HepG2 (cell line): ENCODE measurements at regions of chr3 and their contacts with region 1.

Region 1: GRCh38 chr3:197256836-197257444 is 41.5 kb downstream of the DLG1 start:
- DNase-seq: peak; percentile 41
- ATAC-seq: no peak
- H3K4me3 ChIP-seq: no peak overlapping the region
- H3K27ac ChIP-seq: no peak overlapping the region
- H3K4me1 ChIP-seq: peaks cover 35% of the 10 kb centered on the region
- H3K27me3 ChIP-seq: no peaks in the 10 kb centered on the region
- CTCF ChIP-seq: peak; percentile 46
- EP300 ChIP-seq: no peak
- POLR2A ChIP-seq: no peak
- RAD21 ChIP-seq: 0 out of 2 replicates have a peak, but pooled peaks have one; percentile 25

Region 2: DNA sequence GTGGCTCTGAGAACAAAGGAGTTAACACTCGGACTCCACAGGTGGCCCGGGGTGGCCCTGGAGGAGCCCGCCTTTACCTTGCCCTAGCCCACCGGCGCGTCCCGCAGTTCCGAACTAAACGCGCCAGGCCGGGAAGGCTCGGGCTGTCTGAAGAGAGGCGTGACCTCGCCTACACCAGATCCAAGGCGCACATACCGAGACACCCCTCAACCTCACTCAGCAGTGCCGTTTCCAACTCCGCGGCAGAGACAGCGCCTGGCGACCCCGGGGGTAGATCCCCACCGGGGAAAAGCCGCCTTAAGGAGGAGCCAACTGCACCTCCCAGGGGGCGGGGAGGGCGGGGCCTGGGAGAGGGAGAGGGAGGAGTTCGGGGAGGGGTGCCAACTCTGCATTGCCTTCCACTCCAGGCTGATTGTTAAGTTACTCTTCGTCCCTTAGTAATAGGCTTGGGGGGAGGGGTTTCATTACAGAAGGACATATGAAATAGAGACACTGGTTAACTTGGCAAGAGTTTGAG is 41.5 kb after region 1 on chr3 and contains the start of gene DLG1:
- CTCF ChIA-PET with region 1: no interaction called
- POLR2A ChIA-PET with region 1: interaction called, 3 read pairs
- in situ Hi-C with region 1: no loop called
- intact Hi-C with region 1: loop called (anchors 5 kb)
- DNase-seq: peak; percentile 88
- ATAC-seq: peak; percentile 78
- H3K4me3 ChIP-seq: peak within 1 kb of the TSS; percentile 91 to 95 (median 94)
- H3K27ac ChIP-seq: peak within 1 kb of the TSS; percentile 98
- H3K4me1 ChIP-seq: peaks cover 54% of the 10 kb centered on the region
- H3K27me3 ChIP-seq: no peaks in the 10 kb centered on the region; a peak in 1 of 5 replicates
- CTCF ChIP-seq: no peak
- EP300 ChIP-seq: no peak
- POLR2A ChIP-seq: peak; percentile 87 to 88
- RAD21 ChIP-seq: peak; percentile 49; the same call in 1 of the 2 replicates
- total RNA-seq, gene DLG1: 104 and 105 TPM in 2 replicates

Region 3: DNA sequence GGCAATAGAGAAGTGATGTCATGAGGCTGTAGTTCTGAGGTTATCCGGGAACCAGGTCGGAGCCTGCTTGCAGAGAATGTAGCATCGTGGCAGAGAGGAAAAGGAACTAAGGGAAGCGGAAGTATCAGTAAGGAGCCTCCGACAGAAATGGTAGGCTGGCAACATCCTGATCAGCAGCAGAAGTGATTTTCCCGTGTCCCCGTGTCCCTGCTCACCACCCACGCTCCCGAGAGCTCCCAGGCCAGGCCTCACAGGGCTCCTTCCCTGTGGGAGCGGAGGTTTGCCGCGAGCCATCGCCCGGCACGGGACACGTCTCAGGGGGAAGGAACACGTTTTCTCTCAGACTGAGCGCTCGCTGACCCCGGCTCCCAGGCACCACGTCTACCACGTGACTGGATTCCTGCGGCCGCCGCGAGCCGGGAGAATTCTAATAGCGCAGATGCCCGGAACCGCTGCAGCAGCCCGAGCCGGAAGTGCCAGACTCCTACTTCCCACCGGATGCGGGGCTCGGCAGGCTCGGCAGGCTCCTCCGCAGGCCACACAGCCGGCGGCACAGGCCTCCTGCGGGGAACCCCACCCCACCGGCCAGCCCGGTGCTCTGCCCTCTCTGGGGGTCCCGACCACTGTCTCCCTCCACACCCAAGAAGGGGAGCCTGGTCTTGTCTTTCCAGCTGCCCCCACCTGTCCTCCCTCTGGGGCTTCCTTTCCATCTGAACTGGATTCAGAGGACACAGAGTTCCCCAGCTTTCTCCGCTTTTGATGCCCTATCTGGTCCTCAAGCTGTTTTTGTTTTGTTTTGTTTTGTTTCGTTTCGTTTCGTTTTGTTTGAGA is 199.5 kb after region 1 on chr3:
- CTCF ChIA-PET with region 1: interaction called, 4 read pairs
- POLR2A ChIA-PET with region 1: interaction called, 4 read pairs
- in situ Hi-C with region 1: loop called (anchors 10 kb)
- intact Hi-C with region 1: loop called (anchors 2 kb)
- DNase-seq: peak; percentile 69
- ATAC-seq: peak; percentile 72
- H3K4me3 ChIP-seq: peak overlapping the region; percentile 56 to 67 (median 64); a peak in 5 of 6 replicates
- H3K27ac ChIP-seq: peak overlapping the region; percentile 82
- H3K4me1 ChIP-seq: peaks cover 52% of the 10 kb centered on the region
- H3K27me3 ChIP-seq: no peaks in the 10 kb centered on the region
- CTCF ChIP-seq: no peak
- EP300 ChIP-seq: no peak
- POLR2A ChIP-seq: peak; percentile 67 to 75
- RAD21 ChIP-seq: no peak; the same call in 1 of the 2 replicates

Region 4: DNA sequence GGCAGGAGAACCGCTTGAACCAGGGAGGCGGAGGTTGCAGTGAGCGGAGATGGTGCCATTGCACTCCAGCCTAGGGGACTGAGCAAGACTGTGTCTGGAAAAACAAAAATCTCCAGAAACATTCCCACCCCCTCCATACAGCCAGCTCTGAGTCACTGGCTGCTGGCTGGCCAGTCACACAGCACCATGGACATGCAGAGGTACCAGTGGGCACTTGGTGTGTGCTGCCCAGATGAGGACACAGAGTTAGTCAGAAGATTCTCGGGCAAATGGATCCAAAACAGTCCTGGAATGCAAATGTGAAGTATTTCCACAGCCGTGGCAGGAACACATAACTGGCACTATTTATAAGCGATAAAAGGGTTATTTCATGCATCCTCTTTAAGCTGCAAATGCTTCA is 254.2 kb after region 1 on chr3:
- CTCF ChIA-PET with region 1: interaction called, 14 read pairs
- POLR2A ChIA-PET with region 1: interaction called, 3 read pairs
- in situ Hi-C with region 1: no loop called
- intact Hi-C with region 1: loop called (anchors 1 kb)
- DNase-seq: no peak
- ATAC-seq: no peak
- H3K4me3 ChIP-seq: no peak overlapping the region
- H3K27ac ChIP-seq: no peak overlapping the region
- H3K4me1 ChIP-seq: peaks cover 67% of the 10 kb centered on the region
- H3K27me3 ChIP-seq: no peaks in the 10 kb centered on the region; a peak in 1 of 5 replicates
- CTCF ChIP-seq: no peak
- EP300 ChIP-seq: no peak
- POLR2A ChIP-seq: no peak
- RAD21 ChIP-seq: no peak